Panc1 (cell line): ENCODE measurements at regions of chr3 and their contacts with region 1.

Region 1: DNA sequence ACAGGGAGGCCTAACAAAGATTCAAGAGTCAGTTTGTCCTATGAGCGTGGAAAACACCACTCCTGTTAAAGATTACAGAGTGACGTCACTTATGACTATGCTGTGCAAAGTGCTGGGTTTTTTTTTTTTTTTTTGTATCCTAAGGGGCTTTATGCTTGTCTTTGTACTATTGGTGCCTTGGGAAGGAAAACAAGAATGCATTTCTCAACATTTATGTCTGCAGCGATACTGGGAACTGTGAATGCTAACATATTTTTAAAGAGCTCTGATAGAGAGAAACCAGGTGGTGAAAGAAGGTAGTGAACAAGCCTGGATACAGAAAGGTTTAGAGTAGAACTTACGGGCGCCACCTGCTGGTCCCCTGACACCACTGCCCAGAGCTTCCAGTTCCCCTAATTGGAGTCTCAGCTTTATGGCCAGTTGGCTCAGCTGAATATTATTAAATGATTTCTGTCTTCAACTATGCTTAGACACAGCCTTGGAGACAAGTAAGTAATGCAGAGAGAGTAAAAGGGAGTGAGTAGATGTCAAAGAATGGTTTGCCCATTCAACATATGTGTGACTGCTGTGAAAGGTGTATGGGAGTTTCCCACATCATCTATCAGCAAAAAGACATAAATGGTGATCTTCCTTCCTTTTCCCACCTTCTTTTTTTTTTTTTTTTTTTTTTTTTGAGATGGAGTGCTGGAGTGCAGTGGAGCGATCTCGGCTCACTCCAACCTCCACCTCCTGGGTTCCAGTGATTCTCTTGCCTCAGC is 807.9 kb upstream of the CFAP20DC start:
- DNase-seq: peak; percentile 61
- ATAC-seq: peak; percentile 92
- H3K4me3 ChIP-seq: no peak overlapping the region
- H3K27ac ChIP-seq: no peak overlapping the region
- H3K4me1 ChIP-seq: no peaks in the 10 kb centered on the region; the same call in 1 of the 2 replicates
- H3K27me3 ChIP-seq: no peaks in the 10 kb centered on the region
- CTCF ChIP-seq: peak; percentile 83

Region 2: GRCh38 chr3:59212128-59212779 is 645.5 kb before region 1 on chr3:
- CTCF ChIA-PET with region 1: interaction called, 3 read pairs
- POLR2A ChIA-PET with region 1: no interaction called
- in situ Hi-C with region 1: no loop called
- intact Hi-C with region 1: loop called (anchors 10 kb)
- DNase-seq: peak; percentile 10
- ATAC-seq: peak; percentile 80
- H3K4me3 ChIP-seq: no peak overlapping the region
- H3K27ac ChIP-seq: no peak overlapping the region
- H3K4me1 ChIP-seq: no peaks in the 10 kb centered on the region
- H3K27me3 ChIP-seq: no peaks in the 10 kb centered on the region
- CTCF ChIP-seq: peak; percentile 45; the same call in 1 of the 2 replicates

Region 3: DNA sequence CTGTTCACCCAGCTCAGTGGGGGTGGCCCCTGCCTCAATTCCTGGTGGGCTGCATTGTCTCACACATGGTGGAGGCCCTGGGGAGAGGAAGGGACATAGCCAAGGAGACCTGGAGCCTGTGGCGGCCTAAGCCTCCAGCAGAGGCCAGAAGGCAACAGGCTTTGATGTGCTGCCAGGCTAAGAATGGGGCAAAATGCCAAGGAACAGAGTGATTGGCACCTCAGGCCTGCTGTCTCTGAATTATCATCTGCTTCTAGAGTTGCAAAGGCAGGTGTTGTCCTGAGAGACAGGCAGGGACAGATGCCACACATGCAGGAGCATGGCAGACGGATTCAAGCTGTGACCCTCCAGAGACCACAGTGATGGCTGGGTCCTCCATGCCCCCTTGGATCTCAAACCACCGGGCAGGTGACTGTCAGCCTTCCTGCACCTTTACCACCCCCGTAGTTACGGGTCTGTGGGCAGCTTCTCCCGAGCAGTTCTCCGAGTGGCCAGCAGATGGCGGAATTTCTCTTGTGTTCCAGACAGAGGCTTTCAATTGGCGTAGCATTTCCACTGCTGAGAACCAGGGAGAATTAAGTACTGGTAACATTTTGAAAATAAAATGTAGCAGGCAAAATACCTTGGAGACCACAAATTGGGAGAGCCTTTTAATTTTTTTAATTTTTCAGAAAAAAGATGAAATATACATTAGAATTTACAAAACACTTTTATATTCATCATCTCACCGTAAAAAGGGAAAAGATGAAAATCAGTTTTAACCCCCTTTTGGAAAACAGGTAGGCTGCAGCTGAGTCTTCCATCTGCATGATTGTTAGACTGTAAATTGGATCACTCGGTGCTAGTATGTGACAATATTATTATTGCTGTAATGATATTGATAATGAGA is 282.4 kb before region 1 on chr3:
- CTCF ChIA-PET with region 1: interaction called, 4 read pairs
- POLR2A ChIA-PET with region 1: no interaction called
- in situ Hi-C with region 1: no loop called
- intact Hi-C with region 1: loop called (anchors 5 kb)
- DNase-seq: peak; percentile 55
- ATAC-seq: peak; percentile 87
- H3K4me3 ChIP-seq: no peak overlapping the region
- H3K27ac ChIP-seq: no peak overlapping the region
- H3K4me1 ChIP-seq: no peaks in the 10 kb centered on the region
- H3K27me3 ChIP-seq: no peaks in the 10 kb centered on the region
- CTCF ChIP-seq: peak; percentile 84

Region 4: DNA sequence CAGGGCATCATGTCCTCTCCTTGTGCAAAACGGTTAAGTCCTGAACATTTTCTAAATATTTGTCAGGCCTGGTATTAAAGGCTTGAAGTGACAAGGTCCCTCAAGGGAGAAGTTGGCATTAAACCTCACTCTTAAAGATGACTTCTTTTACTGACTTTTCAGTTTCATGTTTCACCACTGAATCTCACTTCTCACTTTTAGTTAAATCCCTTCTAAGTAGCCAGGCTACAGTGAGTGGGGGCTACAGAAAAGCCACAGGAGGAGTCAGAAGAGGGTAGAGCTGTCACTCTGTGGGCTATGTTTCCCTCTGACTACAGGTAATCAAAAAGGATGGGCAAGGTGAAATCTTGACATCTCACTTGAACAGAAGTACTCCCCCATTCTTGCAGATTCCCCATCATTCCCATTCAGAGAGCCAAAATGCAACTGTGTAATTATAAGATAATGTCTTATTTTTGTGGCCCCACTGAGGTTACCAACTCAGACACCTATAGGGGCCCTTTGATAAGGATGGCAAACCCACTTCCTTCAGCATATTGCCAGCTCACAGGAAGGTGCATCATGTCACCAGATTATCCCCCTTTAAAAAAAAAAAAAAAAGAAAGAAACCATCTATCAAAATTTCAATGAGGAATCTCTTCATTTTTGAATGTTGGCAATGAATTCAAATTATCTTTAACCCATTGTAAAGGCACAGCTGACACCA is 17.8 kb before region 1 on chr3:
- CTCF ChIA-PET with region 1: no interaction called
- POLR2A ChIA-PET with region 1: no interaction called
- in situ Hi-C with region 1: no loop called
- intact Hi-C with region 1: no loop called
- DNase-seq: no peak
- ATAC-seq: no peak
- H3K4me3 ChIP-seq: no peak overlapping the region
- H3K27ac ChIP-seq: no peak overlapping the region
- H3K4me1 ChIP-seq: no peaks in the 10 kb centered on the region
- H3K27me3 ChIP-seq: no peaks in the 10 kb centered on the region
- CTCF ChIP-seq: no peak

Region 5: GRCh38 chr3:61505197-61505596 is 1647.4 kb after region 1 on chr3:
- CTCF ChIA-PET with region 1: interaction called, 10 read pairs
- POLR2A ChIA-PET with region 1: no interaction called
- in situ Hi-C with region 1: no loop called
- intact Hi-C with region 1: no loop called
- DNase-seq: no peak
- ATAC-seq: no peak
- H3K4me3 ChIP-seq: no peak overlapping the region
- H3K27ac ChIP-seq: no peak overlapping the region
- H3K4me1 ChIP-seq: no peaks in the 10 kb centered on the region
- H3K27me3 ChIP-seq: no peaks in the 10 kb centered on the region
- CTCF ChIP-seq: no peak